ENCODE measurements at regions of chr5 and their contacts with region 1.

Region 1: DNA sequence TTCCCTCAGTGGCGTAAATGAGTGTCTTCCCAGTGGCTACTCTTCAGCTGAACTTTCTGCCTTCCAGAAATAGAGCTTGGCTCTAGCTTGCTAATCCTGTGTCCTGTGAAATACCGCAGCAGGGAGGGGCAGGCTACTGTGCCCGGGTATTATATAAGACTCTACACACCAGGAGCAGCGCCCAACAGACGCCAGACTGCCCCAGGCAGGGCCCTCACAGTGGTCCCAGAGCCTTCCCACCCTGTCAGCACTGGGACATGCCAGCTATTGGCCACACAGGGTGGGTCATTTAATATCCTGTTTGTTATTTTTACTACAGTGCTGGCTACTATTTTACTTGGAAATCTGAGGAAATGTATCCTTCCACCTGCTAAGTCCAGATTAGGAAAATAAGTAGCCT is 121.0 kb downstream of the FEM1C start:
- DNase-seq: peak; percentile 76
- ATAC-seq: peak; percentile 96

Region 2: GRCh38 chr5:115389799-115390382 is 33.6 kb before region 1 on chr5:
- intact Hi-C with region 1: loop called (anchors 2 kb)
- DNase-seq: no peak
- ATAC-seq: no peak

Region 3: GRCh38 chr5:115460472-115460871 is 36.9 kb after region 1 on chr5:
- intact Hi-C with region 1: loop called (anchors 1 kb)
- DNase-seq: peak; percentile 85
- ATAC-seq: peak; percentile 90